Calu3 (cell line): ENCODE measurements at regions of chr18 and their contacts with region 1.

Region 1: GRCh38 chr18:5237723-5238370 is 40.8 kb upstream of the AKAIN1 start:
- DNase-seq: peak; percentile 90
- H3K4me3 Mint-ChIP-seq: peak overlapping the region; percentile 91
- H3K27ac Mint-ChIP-seq: peak overlapping the region; percentile 95
- H3K4me1 Mint-ChIP-seq: no peaks in the 10 kb centered on the region
- H3K27me3 Mint-ChIP-seq: no peaks in the 10 kb centered on the region
- CTCF ChIP-seq: no peak

Region 2: DNA sequence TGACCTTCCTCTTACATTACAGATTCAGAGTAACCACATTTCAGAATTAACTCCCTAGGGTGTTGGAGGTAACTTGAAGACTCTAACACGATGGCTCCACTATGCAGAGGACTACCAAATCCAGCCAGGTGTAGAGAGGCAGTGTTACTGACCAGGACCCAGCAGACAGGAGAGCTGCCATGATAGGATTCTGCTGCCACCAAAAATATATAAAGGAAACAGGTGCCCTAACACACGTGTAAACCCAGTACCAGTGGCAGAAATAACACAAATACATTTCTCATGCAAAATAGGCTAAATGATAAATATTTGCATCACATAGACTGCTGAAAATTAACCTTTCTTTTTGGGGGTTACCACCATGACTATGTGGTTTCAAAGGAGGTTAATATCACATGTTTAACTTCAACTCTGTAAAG is 50.7 kb after region 1 on chr18:
- CTCF ChIA-PET with region 1: no interaction called
- intact Hi-C with region 1: loop called (anchors 5 kb)
- DNase-seq: no peak
- H3K4me3 Mint-ChIP-seq: no peak overlapping the region
- H3K27ac Mint-ChIP-seq: no peak overlapping the region
- H3K4me1 Mint-ChIP-seq: no peaks in the 10 kb centered on the region
- H3K27me3 Mint-ChIP-seq: no peaks in the 10 kb centered on the region
- CTCF ChIP-seq: no peak